Endothelial cell of umbilical vein (primary cell): ENCODE measurements at regions of chr6 and their contacts with region 1.

Region 1: GRCh38 chr6:157323255-157323965 is at the start of gene TMEM242:
- DNase-seq: peak; percentile 98
- H3K4me3 ChIP-seq: peak within 1 kb of the TSS; percentile 70 to 89 (median 72)
- H3K27ac ChIP-seq: peak within 1 kb of the TSS; percentile 94
- H3K4me1 ChIP-seq: peaks cover 30% of the 10 kb centered on the region
- H3K27me3 ChIP-seq: no peaks in the 10 kb centered on the region
- CTCF ChIP-seq: peak in 1 of 2 donors; percentile 14
- POLR2A ChIP-seq: peak; percentile 98
- total RNA-seq, gene TMEM242: 15.3 and 15.5 TPM in 2 replicates

Region 2: GRCh38 chr6:157339432-157339831 is 16.0 kb after region 1 on chr6:
- CTCF ChIA-PET with region 1: interaction called, 52 read pairs
- POLR2A ChIA-PET with region 1: no interaction called
- dilution Hi-C with region 1: no loop called
- intact Hi-C with region 1: no loop called
- DNase-seq: no peak
- H3K4me3 ChIP-seq: no peak overlapping the region
- H3K27ac ChIP-seq: no peak overlapping the region
- H3K4me1 ChIP-seq: no peaks in the 10 kb centered on the region
- H3K27me3 ChIP-seq: peaks cover 9 to 20% of the 10 kb centered on the region in 2 experiments
- CTCF ChIP-seq: no peak
- POLR2A ChIP-seq: no peak

Region 3: GRCh38 chr6:157461000-157461915 is 137.8 kb after region 1 on chr6:
- CTCF ChIA-PET with region 1: no interaction called
- POLR2A ChIA-PET with region 1: no interaction called
- dilution Hi-C with region 1: no loop called
- intact Hi-C with region 1: loop called (anchors 2 kb)
- DNase-seq: peak; percentile 84
- H3K4me3 ChIP-seq: no peak overlapping the region
- H3K27ac ChIP-seq: peak overlapping the region; percentile 72
- H3K4me1 ChIP-seq: peaks cover 24% of the 10 kb centered on the region
- H3K27me3 ChIP-seq: no peaks in the 10 kb centered on the region
- CTCF ChIP-seq: peak; percentile 31 to 52
- POLR2A ChIP-seq: no peak

Region 4: GRCh38 chr6:157579467-157580031 is 256.1 kb after region 1 on chr6:
- CTCF ChIA-PET with region 1: no interaction called
- POLR2A ChIA-PET with region 1: no interaction called
- dilution Hi-C with region 1: no loop called
- intact Hi-C with region 1: loop called (anchors 1 kb)
- DNase-seq: peak; percentile 90
- H3K4me3 ChIP-seq: no peak overlapping the region
- H3K27ac ChIP-seq: peak overlapping the region; percentile 74
- H3K4me1 ChIP-seq: peaks cover 21% of the 10 kb centered on the region
- H3K27me3 ChIP-seq: no peaks in the 10 kb centered on the region
- CTCF ChIP-seq: no peak
- POLR2A ChIP-seq: no peak

Region 5: DNA sequence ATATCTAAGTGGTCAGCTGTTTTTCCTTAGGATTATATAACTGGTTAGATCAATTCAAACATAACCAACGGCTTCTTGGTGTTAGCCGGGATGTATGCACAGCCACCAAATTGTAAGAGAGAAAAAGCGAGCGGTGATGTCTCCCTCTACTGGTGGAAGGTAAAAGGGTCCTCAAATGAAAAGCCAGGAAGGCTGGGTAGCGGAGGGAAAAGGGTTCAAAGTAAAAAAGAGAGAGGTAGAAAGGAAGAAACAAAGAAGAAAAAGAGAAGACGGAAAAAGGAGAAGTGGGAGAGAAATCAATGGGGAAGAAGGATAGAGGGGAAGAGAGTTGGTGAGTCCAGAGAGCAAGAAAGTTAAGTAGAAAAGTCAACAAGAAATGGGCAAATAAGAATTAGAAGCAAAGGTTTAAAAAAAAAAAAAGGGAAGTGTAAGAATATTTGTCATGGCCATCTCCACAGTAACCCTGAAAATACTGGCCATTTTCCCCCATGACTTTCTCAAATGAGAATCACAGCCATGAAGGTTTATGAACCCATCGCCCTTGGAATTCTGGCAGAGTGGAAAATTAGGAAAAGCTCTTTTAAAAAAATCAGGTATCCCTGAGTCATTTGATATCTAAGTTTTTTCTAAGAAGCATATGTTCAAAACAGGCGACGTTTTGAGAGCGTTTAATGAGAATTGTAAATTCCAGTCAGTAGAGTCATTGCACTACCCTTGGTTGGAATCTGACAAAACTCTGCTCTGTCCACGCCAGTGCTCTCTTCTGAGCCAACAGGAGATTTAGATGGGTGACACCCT is 344.0 kb after region 1 on chr6:
- CTCF ChIA-PET with region 1: interaction called, 10 read pairs
- POLR2A ChIA-PET with region 1: no interaction called
- dilution Hi-C with region 1: no loop called
- intact Hi-C with region 1: no loop called
- DNase-seq: peak; percentile 73
- H3K4me3 ChIP-seq: no peak overlapping the region
- H3K27ac ChIP-seq: no peak overlapping the region
- H3K4me1 ChIP-seq: peaks cover 7% of the 10 kb centered on the region
- H3K27me3 ChIP-seq: no peaks in the 10 kb centered on the region
- CTCF ChIP-seq: peak; percentile 75 to 88
- POLR2A ChIP-seq: no peak

Region 6: GRCh38 chr6:158131926-158132325 is 808.5 kb after region 1 on chr6:
- CTCF ChIA-PET with region 1: no interaction called
- POLR2A ChIA-PET with region 1: no interaction called
- dilution Hi-C with region 1: no loop called
- intact Hi-C with region 1: loop called (anchors 10 kb)
- DNase-seq: peak; percentile 53
- H3K4me3 ChIP-seq: no peak overlapping the region
- H3K27ac ChIP-seq: no peak overlapping the region
- H3K4me1 ChIP-seq: no peaks in the 10 kb centered on the region
- H3K27me3 ChIP-seq: no peaks in the 10 kb centered on the region
- CTCF ChIP-seq: peak; percentile 49
- POLR2A ChIP-seq: no peak